GM13976 (cell line): ENCODE measurements at regions of chr7 and their contacts with region 1.

Region 1: GRCh38 chr7:21200503-21200902 is 227.4 kb upstream of the SP4 start:
- DNase-seq: no peak
- CTCF ChIP-seq: no peak

Region 2: GRCh38 chr7:21108182-21108581 is 92.3 kb before region 1 on chr7:
- in situ Hi-C with region 1: loop called (anchors 25 kb)
- DNase-seq: no peak
- CTCF ChIP-seq: no peak